PC-3 (cell line): ENCODE measurements at regions of chr13 and their contacts with region 1.

Region 1: DNA sequence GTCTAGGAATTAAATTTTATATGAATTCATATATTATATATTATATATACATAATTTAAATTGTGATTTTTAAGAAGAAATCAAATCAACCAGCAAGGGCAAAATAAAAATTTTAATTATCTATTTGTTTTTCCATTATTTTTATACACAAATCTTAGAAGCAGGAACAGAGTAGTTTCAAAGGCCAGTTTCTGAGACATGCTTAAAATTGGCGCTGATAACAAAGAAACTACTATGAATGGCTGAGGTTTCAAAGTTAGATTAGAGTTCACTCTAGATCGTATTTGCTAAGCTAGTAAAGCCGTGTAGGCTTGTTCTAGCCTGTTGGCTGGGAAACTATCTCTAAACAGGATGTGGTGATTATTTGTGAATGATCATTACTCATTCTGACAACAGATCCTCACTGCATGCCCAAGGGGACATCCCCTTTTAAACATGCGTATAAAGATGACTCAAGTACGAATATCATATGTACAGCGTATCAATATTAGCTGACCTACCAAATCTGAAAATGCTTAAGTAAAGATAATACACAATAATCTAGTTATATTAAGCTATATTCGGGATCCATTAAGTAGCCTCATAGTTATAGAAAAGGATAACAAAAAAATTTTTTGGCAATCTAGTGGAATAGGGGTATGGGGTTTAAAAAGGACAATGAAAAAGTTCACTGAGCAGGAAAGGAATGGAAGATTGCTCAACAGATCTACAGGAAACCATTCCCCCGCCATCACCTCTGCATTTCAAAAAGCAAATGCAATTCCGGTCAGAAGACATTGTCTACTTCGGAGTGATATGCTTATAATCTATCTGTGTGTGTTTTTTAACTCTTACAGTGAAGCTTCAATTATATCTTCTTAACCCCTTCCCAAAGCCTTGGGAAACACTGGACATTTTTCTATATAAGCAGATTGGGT is 150.1 kb downstream of the SHISA2 start:
- DNase-seq: peak; percentile 96
- ATAC-seq: peak; percentile 88
- H3K4me3 ChIP-seq: peak overlapping the region; percentile 15; the same call in 1 of the 2 replicates
- H3K27ac ChIP-seq: peak overlapping the region; percentile 88
- H3K4me1 ChIP-seq: peaks cover 37% of the 10 kb centered on the region
- H3K27me3 ChIP-seq: no peaks in the 10 kb centered on the region
- CTCF ChIP-seq: no peak

Region 2: DNA sequence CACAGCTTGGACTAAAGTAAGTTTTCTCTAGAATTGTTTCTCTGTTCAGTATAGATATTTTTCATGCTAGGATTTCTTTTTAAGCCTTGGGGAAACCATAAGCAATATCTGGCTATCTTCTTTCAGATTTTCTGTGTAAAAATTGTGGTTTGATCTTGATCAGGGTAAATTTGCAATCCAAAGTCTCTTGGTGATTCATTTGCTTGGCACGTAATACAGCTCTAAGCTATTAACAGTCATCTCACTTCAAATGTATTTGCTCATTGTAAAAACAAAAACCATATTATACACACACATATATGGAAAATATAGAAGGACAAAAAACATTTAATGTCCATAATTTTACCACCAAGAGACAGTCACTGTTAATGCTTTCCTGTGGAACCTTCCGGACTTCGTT is 40.9 kb before region 1 on chr13:
- CTCF ChIA-PET with region 1: no interaction called
- POLR2A ChIA-PET with region 1: interaction called, 19 read pairs
- intact Hi-C with region 1: loop called (anchors 5 kb)
- DNase-seq: peak; percentile 87
- ATAC-seq: peak; percentile 72
- H3K4me3 ChIP-seq: no peak overlapping the region; the same call in 1 of the 2 replicates
- H3K27ac ChIP-seq: peak overlapping the region; percentile 89
- H3K4me1 ChIP-seq: peaks cover 47% of the 10 kb centered on the region
- H3K27me3 ChIP-seq: no peaks in the 10 kb centered on the region
- CTCF ChIP-seq: no peak

Region 3: DNA sequence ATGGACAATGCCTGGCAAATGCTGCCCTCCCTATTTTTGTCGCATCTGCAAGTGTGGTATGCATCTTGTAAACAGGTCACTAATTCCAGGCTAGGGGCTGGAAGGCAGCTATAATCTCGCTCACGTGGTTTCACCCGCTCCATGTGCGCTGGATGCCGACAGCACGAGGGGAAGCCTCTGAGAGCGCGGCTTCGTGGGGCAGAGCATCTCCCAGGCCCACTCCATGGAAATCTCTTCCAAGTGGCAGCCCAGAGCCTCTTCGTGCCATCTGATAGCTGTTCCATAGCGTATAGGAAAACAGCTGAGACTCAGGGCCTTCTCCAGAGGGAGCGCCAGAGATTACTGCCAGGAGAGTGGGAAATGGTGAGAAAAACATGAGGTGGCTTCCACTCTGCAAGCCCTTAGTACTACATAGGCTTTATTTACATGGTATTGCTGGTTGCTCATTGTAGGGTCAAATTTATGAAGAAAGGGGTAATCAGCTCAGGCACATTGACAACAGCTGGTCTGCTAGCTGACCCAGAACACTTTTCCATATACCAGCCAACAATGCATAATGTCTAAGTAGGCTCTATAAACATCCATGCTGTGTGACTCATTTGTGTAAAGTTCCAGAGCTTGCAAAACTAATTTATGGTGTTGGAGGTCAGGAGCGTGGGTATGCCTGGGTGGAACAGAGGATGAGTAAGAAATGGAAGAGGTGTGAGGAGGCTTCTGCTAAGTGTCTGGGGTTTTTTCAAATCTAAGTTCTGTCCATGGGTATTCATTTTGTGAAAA is 15.1 kb before region 1 on chr13:
- CTCF ChIA-PET with region 1: interaction called, 3 read pairs
- POLR2A ChIA-PET with region 1: interaction called, 3 read pairs
- intact Hi-C with region 1: loop called (anchors 2 kb)
- DNase-seq: peak; percentile 91
- ATAC-seq: peak; percentile 97
- H3K4me3 ChIP-seq: no peak overlapping the region
- H3K27ac ChIP-seq: peak overlapping the region; percentile 81
- H3K4me1 ChIP-seq: peaks cover 20% of the 10 kb centered on the region
- H3K27me3 ChIP-seq: no peaks in the 10 kb centered on the region
- CTCF ChIP-seq: peak; percentile 21; the same call in 1 of the 2 replicates

Region 4: DNA sequence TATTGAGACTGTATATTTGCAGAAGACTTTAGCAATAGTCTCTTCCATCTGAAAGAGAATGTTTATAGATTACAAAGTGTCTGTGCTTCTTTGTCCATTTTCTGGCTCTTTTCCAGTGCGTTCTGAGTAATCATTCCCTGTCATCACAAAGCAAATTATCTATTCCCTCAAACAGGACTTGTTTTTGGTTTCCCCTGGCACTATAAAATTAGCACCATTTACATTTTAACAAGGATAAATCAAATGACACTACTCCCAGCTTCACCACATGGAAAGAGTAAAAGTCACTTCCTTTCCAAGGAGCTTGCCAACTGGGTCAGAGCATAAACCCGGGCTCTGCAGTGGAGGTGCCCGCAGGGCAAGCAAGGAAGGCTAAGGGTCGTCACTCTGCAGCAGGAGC is 62.0 kb after region 1 on chr13:
- CTCF ChIA-PET with region 1: no interaction called
- POLR2A ChIA-PET with region 1: no interaction called
- intact Hi-C with region 1: loop called (anchors 5 kb)
- DNase-seq: peak; percentile 68
- ATAC-seq: peak; percentile 74
- H3K4me3 ChIP-seq: no peak overlapping the region
- H3K27ac ChIP-seq: peak overlapping the region; percentile 27; the same call in 1 of the 2 replicates
- H3K4me1 ChIP-seq: peaks cover 34% of the 10 kb centered on the region
- H3K27me3 ChIP-seq: no peaks in the 10 kb centered on the region
- CTCF ChIP-seq: no peak

Region 5: DNA sequence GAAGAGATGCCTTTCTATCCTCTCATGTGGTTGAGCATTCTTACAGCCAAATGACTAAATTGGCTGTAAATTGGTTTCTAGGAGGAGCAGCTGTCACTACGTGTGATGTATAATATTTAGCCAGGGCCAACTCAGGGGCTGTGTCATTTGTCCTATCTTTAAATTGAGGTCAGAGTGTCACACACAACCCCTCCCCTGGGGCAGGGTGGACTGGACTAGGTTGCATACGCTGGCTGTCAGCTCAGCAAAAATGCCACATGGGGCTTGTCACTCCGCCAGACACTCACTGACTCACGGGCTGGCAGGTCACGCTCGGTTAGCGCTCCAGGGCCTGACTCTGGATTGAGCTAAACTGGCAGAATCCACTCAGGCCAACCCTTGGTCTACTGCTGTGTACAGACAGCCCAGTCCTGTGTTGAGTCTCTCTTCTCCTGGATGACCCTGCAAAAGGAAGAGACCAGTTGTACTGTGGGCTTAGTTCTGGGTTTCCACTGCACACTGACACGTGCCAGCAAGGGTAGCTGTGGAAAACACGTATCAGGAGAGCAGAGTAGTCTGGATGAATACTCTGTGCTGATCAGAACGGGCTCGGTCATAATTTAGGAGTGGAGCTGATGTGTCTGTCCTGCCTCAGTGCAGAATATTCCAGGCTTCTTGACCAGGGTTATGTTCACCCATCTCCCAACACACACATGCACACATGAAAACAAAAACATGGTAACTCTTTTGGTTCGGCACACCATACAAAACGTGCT is 121.0 kb after region 1 on chr13:
- CTCF ChIA-PET with region 1: no interaction called
- POLR2A ChIA-PET with region 1: no interaction called
- intact Hi-C with region 1: loop called (anchors 5 kb)
- DNase-seq: peak; percentile 97
- ATAC-seq: peak; percentile 87
- H3K4me3 ChIP-seq: no peak overlapping the region
- H3K27ac ChIP-seq: peak overlapping the region; percentile 99
- H3K4me1 ChIP-seq: peaks cover 57% of the 10 kb centered on the region
- H3K27me3 ChIP-seq: no peaks in the 10 kb centered on the region
- CTCF ChIP-seq: no peak

Region 6: GRCh38 chr13:26048741-26049140 is 147.0 kb after region 1 on chr13:
- CTCF ChIA-PET with region 1: no interaction called
- POLR2A ChIA-PET with region 1: interaction called, 3 read pairs
- intact Hi-C with region 1: loop called (anchors 5 kb)
- DNase-seq: no peak
- ATAC-seq: no peak
- H3K4me3 ChIP-seq: peak overlapping the region; percentile 67; the same call in 1 of the 2 replicates
- H3K27ac ChIP-seq: no peak overlapping the region
- H3K4me1 ChIP-seq: peaks cover 11% of the 10 kb centered on the region
- H3K27me3 ChIP-seq: no peaks in the 10 kb centered on the region
- CTCF ChIP-seq: no peak